Natural killer cell (primary cell): ENCODE measurements at regions of chr20 and their contacts with region 1.

Region 1: DNA sequence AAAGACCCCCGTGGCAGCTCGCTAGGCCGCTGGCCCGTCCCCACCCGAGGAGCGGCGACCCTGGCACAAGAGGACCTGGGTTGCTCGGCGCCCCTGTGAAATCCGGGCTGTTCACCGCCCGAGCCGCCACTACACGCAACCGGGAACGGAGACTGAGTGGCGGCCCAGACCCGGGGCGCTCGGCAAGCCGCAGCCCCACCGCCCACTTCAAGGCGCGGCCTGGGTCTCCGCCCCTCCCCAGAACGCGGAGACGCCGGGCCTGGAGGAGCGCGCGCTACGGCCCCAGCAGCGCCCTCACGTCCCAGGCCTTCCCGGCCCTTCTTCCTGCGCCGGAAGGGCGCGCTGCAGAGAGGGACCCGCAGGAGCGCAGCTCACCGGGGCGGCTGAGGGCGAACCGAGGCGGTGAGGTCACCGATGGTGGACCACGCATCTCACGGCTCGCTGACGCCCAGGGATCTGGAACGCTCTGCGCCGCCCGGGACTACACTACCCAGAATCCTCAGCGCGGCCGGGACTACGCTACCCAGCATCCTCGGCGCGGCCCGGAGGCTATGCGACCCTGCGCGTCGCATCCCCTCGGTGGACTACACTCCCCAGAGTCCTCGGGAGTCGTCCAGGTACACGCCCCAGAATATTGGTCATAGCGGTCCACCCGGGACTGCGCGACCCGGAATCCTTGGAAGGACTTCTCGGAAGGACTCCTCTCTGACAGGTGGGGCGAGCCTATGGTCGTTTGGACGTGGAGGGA is at the start of gene ZNF337:
- DNase-seq: peak; percentile 88 to 95
- ATAC-seq: peak; percentile 98 to 100 (median 98)
- H3K4me3 ChIP-seq: peak within 1 kb of the TSS; percentile 68
- H3K4me3 Mint-ChIP-seq: peak within 1 kb of the TSS; percentile 95
- H3K27ac ChIP-seq: peak within 1 kb of the TSS; percentile 60
- H3K27ac Mint-ChIP-seq: peak within 1 kb of the TSS; percentile 86 to 94
- H3K4me1 ChIP-seq: peaks cover 10% of the 10 kb centered on the region
- H3K4me1 Mint-ChIP-seq: peaks cover 11 to 21% of the 10 kb centered on the region in 2 donors
- H3K27me3 ChIP-seq: no peaks in the 10 kb centered on the region
- H3K27me3 Mint-ChIP-seq: peaks cover 0 to 10% of the 10 kb centered on the region in 2 donors
- CTCF ChIP-seq: no peak
- total RNA-seq, gene ZNF337: 17.6 to 25.3 (median 18.0) TPM

Region 2: DNA sequence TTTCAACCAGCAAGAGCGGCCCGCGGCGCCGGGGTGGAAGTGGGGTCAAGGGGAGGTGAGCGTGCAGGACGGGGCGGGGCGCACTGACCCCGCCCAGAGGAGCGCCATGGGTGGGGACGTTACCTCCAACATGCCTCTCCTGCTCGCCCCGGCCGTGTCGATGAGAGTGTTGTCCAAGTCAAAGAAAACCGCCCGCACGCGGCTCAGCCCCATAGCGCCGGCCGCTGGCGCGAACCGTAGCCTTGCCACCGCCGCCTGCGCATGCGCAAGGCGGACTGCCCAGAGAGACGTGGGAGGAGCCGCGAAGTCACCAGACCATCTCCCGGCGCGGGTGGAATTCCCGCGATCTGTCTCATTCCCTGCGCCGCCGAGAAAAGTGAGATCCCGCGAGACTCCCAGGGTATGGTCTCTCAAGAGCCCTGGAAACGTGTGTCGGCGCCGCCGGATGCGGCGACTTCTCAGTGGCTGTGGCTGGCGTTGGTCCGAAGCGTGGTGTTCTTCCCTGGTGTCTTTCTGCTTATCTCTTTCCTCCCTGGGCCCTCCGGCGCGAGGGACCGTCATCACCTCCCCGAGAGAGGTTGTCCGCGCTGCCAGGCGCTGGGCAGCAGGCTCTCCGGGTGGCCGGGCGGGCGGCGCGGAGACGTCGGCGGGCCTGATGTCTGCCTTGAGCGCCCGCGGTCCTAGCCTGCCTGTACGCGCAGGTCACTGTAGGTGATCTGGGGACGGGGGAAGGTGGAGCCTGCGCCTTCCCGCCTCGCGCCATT is 72.6 kb before region 1 on chr20 and contains the start of gene NANP:
- intact Hi-C with region 1: loop called (anchors 1 kb)
- DNase-seq: peak; percentile 81 to 93
- ATAC-seq: peak; percentile 81 to 89 (median 82)
- H3K4me3 ChIP-seq: peak within 1 kb of the TSS; percentile 89
- H3K4me3 Mint-ChIP-seq: peak within 1 kb of the TSS; percentile 97
- H3K27ac ChIP-seq: peak within 1 kb of the TSS; percentile 89
- H3K27ac Mint-ChIP-seq: peak within 1 kb of the TSS; percentile 92 to 96
- H3K4me1 ChIP-seq: peaks cover 16% of the 10 kb centered on the region
- H3K4me1 Mint-ChIP-seq: peaks cover 24 to 30% of the 10 kb centered on the region in 2 donors
- H3K27me3 ChIP-seq: no peaks in the 10 kb centered on the region
- H3K27me3 Mint-ChIP-seq: no peaks in the 10 kb centered on the region
- CTCF ChIP-seq: no peak
- total RNA-seq, gene NANP: 3.1 to 4.0 (median 3.2) TPM

Region 3: DNA sequence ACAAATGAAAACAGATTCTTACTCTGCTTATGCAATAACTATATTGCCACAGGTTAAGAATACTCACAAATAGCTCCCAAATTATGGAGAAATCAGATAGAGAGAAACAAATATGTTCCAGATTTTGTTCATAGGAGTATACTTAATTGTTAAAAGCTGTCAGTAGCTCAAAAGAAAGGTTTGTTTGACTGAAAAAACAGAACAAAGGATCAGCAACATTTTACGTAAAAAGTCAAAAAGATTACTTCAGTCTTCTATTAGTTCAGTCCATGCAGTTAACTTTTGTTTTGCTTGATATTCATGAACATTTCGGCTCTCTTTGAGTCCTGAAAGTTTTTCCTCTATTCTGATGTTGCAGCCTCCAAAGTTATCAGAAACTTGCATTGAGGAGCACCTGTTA is 59.3 kb before region 1 on chr20:
- intact Hi-C with region 1: no loop called
- DNase-seq: no peak
- ATAC-seq: no peak
- H3K4me3 ChIP-seq: no peak overlapping the region
- H3K4me3 Mint-ChIP-seq: no peak overlapping the region
- H3K27ac ChIP-seq: no peak overlapping the region
- H3K27ac Mint-ChIP-seq: no peak overlapping the region
- H3K4me1 ChIP-seq: no peaks in the 10 kb centered on the region
- H3K4me1 Mint-ChIP-seq: no peaks in the 10 kb centered on the region
- H3K27me3 ChIP-seq: no peaks in the 10 kb centered on the region
- H3K27me3 Mint-ChIP-seq: no peaks in the 10 kb centered on the region
- CTCF ChIP-seq: no peak

Region 4: GRCh38 chr20:25669826-25670422 is 26.6 kb before region 1 on chr20:
- intact Hi-C with region 1: no loop called
- DNase-seq: no peak
- ATAC-seq: no peak
- H3K4me3 ChIP-seq: no peak overlapping the region
- H3K4me3 Mint-ChIP-seq: no peak overlapping the region
- H3K27ac ChIP-seq: no peak overlapping the region
- H3K27ac Mint-ChIP-seq: no peak overlapping the region
- H3K4me1 ChIP-seq: no peaks in the 10 kb centered on the region
- H3K4me1 Mint-ChIP-seq: peaks cover 0 to 5% of the 10 kb centered on the region in 2 donors
- H3K27me3 ChIP-seq: no peaks in the 10 kb centered on the region
- H3K27me3 Mint-ChIP-seq: no peaks in the 10 kb centered on the region
- CTCF ChIP-seq: no peak

Region 5: DNA sequence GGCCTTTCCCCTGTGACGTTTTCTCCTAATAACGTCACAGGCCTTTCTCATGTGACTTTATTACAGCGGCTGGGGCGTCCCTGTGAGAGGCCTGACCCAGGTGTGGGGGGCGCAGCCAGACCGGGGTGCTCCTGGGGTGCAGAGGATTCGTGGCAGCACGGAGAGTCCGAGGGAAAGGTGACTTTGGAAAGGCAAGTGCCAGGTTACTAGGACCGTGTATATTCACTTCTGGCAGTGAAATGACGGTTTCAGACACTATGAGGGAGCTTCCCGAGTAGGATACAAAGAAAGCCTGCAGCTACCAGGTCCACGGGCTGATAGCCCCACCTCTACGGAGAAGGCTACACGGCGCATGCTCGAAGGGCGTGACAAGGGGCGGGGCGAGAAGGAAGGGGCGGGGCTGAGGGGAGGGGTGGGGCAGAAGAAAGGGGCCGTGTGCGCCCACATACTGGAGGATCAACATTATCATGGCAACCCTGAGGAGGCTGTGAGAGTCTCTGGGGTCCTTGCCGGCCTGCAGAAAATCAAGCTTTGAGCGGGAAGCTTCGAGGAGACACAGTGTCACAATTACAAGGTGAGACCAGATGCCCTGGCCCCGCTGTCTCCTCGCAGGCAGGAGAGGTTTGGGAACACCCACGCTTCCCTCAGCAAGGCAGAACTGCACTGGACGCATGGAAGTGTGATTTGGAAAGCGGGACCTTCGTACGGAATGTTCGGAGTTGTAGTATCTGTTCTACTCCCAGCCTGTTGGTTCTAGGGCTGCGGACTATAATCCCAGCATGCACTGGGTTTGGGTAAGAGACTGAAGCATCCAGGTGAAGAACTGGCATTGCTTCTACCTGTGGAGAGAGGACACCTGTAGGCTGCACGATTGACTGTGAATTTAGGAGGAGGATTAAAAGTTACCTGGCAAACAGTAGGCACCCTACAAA is 54.5 kb after region 1 on chr20:
- intact Hi-C with region 1: loop called (anchors 1 kb)
- DNase-seq: peak; percentile 46 to 71
- ATAC-seq: peak; percentile 88 to 95 (median 94)
- H3K4me3 ChIP-seq: peak overlapping the region; percentile 50
- H3K4me3 Mint-ChIP-seq: peak overlapping the region; percentile 93
- H3K27ac ChIP-seq: peak overlapping the region; percentile 37
- H3K27ac Mint-ChIP-seq: peak overlapping the region; percentile 85 to 88
- H3K4me1 ChIP-seq: peaks cover 7% of the 10 kb centered on the region
- H3K4me1 Mint-ChIP-seq: peaks cover 12 to 14% of the 10 kb centered on the region in 2 donors
- H3K27me3 ChIP-seq: no peaks in the 10 kb centered on the region
- H3K27me3 Mint-ChIP-seq: peaks cover 0 to 3% of the 10 kb centered on the region in 2 donors
- CTCF ChIP-seq: no peak